ENCODE measurements at regions of chr16 and their contacts with region 1.

Region 1: DNA sequence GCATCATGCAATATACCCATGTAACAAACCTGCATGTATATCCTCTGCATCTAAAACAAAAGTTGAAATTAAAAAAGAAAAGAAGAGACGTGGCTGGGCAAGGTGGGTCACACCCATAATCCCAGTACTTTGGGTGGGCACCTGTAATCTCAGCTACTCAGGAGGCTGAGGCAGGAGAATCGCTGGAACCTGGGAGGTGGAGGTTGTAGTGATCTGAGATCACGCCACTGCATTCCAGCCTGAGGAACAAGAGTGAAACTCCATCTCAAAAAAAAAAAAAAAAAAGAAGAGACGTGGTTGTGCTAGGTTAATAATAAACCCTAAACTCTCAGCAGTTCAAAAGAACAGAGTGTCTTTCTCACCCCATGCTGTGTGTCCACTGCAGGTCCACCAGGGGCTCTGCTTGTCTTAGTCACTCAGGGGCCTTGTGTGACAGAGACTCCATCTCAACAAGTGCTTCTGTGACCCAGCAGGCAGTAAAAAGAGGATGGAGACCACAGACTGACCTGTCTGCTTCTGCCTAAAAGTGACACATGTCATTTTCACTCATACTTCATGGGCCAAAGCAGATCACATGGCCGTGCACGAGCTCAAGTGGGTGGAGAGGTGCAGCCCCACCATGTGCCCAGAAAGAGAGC is 22.3 kb upstream of the N4BP1 start:
- DNase-seq: no peak
- ATAC-seq: no peak
- H3K4me3 ChIP-seq: no peak overlapping the region
- H3K4me3 Mint-ChIP-seq: no peak overlapping the region
- H3K27ac ChIP-seq: no peak overlapping the region
- H3K27ac Mint-ChIP-seq: no peak overlapping the region
- H3K4me1 ChIP-seq: peaks cover 0 to 5% of the 10 kb centered on the region in 2 donors
- H3K4me1 Mint-ChIP-seq: peaks cover 0 to 9% (median 7%) of the 10 kb centered on the region in 7 donors
- H3K27me3 ChIP-seq: no peaks in the 10 kb centered on the region
- H3K27me3 Mint-ChIP-seq: peaks cover 0 to 2% (median 0%) of the 10 kb centered on the region in 5 donors

Region 2: GRCh38 chr16:48156790-48157209 is 475.5 kb before region 1 on chr16:
- CTCF ChIA-PET with region 1: no interaction called
- POLR2A ChIA-PET with region 1: no interaction called
- intact Hi-C with region 1: loop called in 1 of 2 experiments (anchors 2 kb)
- DNase-seq: peak; percentile 33 to 89 (median 69)
- ATAC-seq: peak; percentile 88
- H3K4me3 ChIP-seq: no peak overlapping the region
- H3K4me3 Mint-ChIP-seq: no peak overlapping the region
- H3K27ac ChIP-seq: no peak overlapping the region
- H3K27ac Mint-ChIP-seq: no peak overlapping the region
- H3K4me1 ChIP-seq: no peaks in the 10 kb centered on the region
- H3K4me1 Mint-ChIP-seq: peaks cover 0 to 23% (median 0%) of the 10 kb centered on the region in 7 donors
- H3K27me3 ChIP-seq: no peaks in the 10 kb centered on the region
- H3K27me3 Mint-ChIP-seq: peaks cover 0 to 41% (median 9%) of the 10 kb centered on the region in 5 donors

Region 3: GRCh38 chr16:48164907-48165726 is 467.1 kb before region 1 on chr16:
- CTCF ChIA-PET with region 1: interaction called, 3 read pairs
- POLR2A ChIA-PET with region 1: no interaction called
- intact Hi-C with region 1: loop called in 1 of 2 experiments (anchors 2 kb)
- DNase-seq: peak; percentile 20 to 71 (median 45)
- ATAC-seq: peak; percentile 87
- H3K4me3 ChIP-seq: no peak overlapping the region
- H3K4me3 Mint-ChIP-seq: peak overlapping the region in 1 of 10 donors; percentile 32
- H3K27ac ChIP-seq: no peak overlapping the region
- H3K27ac Mint-ChIP-seq: peak overlapping the region in 2 of 9 donors; percentile 50 to 88
- H3K4me1 ChIP-seq: no peaks in the 10 kb centered on the region
- H3K4me1 Mint-ChIP-seq: peaks cover 0 to 8% (median 4%) of the 10 kb centered on the region in 7 donors
- H3K27me3 ChIP-seq: no peaks in the 10 kb centered on the region
- H3K27me3 Mint-ChIP-seq: peaks cover 4 to 8% (median 4%) of the 10 kb centered on the region in 5 donors

Region 4: DNA sequence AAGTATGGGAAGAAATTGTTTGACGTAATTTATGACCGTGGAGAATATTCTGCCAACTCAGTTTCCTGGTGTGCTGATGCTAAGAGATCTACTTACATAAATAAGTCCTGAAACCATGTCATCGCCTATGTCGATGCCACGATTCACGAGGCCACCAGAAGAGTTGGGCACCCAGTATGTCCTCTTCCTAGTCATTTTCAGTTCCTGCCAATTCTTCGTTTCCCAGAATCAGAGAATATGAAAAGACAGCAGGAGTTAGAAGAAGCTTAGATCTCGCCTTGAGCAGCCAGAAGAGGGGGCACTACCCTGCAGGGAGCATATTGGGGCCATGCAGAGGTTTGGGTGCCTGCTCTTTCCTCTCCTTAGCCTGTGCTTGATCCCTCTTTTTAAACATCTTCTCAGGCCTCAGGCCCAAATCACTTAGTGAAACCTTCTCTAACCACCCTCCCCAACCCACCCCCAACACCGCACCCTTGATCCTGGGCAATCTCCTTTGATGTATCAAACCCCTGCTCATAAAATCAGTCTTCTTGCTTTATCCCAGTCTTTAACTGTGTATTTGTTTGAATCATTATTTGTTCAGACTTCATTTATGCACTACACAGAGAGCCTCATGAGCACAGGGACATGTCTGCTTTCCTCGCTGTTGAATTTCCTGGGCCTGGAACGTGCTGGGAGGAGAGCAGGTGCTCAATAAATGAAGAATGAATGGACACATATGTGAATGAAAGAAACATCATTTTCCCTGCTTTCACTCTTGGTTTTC is 400.3 kb before region 1 on chr16:
- CTCF ChIA-PET with region 1: interaction called, 5 read pairs
- POLR2A ChIA-PET with region 1: no interaction called
- intact Hi-C with region 1: loop called (anchors 1 kb)
- DNase-seq: peak in 4 of 9 donors; percentile 3 to 25 (median 15)
- ATAC-seq: peak; percentile 63
- H3K4me3 ChIP-seq: no peak overlapping the region
- H3K4me3 Mint-ChIP-seq: no peak overlapping the region
- H3K27ac ChIP-seq: no peak overlapping the region
- H3K27ac Mint-ChIP-seq: peak overlapping the region in 3 of 9 donors; percentile 31 to 62 (median 56)
- H3K4me1 ChIP-seq: no peaks in the 10 kb centered on the region
- H3K4me1 Mint-ChIP-seq: peaks cover 0 to 21% (median 0%) of the 10 kb centered on the region in 7 donors
- H3K27me3 ChIP-seq: no peaks in the 10 kb centered on the region
- H3K27me3 Mint-ChIP-seq: peaks cover 6 to 10% (median 7%) of the 10 kb centered on the region in 5 donors

Measured in naive thymus-derived CD4-positive, alpha-beta T cell (primary cell).